T-cell (primary cell): ENCODE measurements at regions of chr1 and their contacts with region 1.

Region 1: DNA sequence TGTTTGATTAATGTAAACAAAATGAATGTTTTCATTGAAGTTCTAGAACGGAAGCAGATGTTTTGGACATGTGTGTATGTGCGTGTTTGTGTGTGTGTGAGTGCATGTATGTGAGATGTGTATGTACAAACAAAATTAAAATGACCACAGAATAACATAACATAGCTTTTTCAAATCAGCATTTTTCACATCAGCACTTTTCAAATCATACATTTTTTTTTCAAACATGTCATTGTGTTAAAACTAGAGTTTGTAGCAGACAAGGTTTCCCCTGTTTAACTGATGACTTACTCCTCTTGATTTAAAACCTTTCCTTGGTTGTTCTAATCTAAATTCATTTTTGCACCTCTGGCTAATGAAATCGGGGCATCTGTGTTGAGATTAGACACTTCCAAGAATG is 35.6 kb upstream of the ZNHIT6 start:
- DNase-seq: no peak
- ATAC-seq: no peak
- H3K4me3 ChIP-seq: no peak overlapping the region
- H3K4me3 Mint-ChIP-seq: no peak overlapping the region
- H3K27ac ChIP-seq: no peak overlapping the region
- H3K27ac Mint-ChIP-seq: no peak overlapping the region
- H3K4me1 ChIP-seq: no peaks in the 10 kb centered on the region
- H3K4me1 Mint-ChIP-seq: no peaks in the 10 kb centered on the region
- H3K27me3 ChIP-seq: peaks cover 0 to 2% of the 10 kb centered on the region in 2 experiments
- H3K27me3 Mint-ChIP-seq: peaks cover 13 to 17% of the 10 kb centered on the region in 2 donors

Region 2: GRCh38 chr1:84286071-84286470 is 1457.7 kb before region 1 on chr1:
- CTCF ChIA-PET with region 1: no interaction called
- POLR2A ChIA-PET with region 1: interaction called in 1 of 2 experiments, 11 read pairs
- DNase-seq: no peak
- ATAC-seq: no peak
- H3K4me3 ChIP-seq: no peak overlapping the region
- H3K4me3 Mint-ChIP-seq: no peak overlapping the region
- H3K27ac ChIP-seq: no peak overlapping the region
- H3K27ac Mint-ChIP-seq: no peak overlapping the region
- H3K4me1 ChIP-seq: no peaks in the 10 kb centered on the region
- H3K4me1 Mint-ChIP-seq: no peaks in the 10 kb centered on the region
- H3K27me3 ChIP-seq: peaks cover 0 to 5% of the 10 kb centered on the region in 2 experiments
- H3K27me3 Mint-ChIP-seq: peaks cover 0 to 27% of the 10 kb centered on the region in 2 donors